ENCODE measurements at regions of chr6 and their contacts with region 1.

Region 1: DNA sequence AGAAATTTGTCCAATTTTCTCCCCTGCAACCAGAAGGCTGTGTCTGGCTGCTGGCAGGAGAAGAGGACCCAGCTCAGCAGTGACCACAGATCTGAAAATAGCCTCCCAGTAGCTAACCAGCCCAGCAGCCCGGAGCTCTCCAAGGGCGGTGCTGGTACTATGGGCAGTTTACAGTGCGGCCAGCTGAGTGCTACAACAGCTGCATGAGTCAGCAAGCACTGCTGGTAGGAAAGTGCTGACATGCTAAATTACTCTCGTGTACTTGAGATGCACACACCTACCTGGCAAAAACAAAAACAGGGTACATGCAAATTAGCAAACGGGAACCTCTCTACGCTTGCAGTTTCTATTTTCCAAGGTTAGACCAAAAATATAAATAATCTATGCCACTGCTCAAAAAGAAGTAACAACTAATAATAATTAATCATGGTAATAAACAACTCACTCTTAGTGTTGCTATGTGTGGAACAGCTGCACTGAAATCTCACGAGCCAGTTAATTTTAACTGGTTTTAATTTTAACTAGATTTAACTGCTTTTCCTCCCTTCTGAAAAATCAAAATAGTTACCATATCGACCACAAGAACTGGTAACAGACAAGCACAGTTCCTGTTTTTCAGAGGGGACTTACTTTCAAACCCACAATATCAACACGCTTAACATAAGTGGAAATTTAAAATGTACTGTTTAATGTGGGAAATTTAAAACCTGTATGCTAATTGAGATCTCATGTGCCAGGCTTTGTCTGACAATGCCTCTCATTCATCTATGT is 10.8 kb downstream of the BACH2 start:
- DNase-seq: peak; percentile 51
- H3K4me3 Mint-ChIP-seq: peak overlapping the region; percentile 71
- H3K27ac Mint-ChIP-seq: peak overlapping the region; percentile 90
- H3K4me1 Mint-ChIP-seq: peaks cover 83% of the 10 kb centered on the region
- H3K27me3 Mint-ChIP-seq: no peaks in the 10 kb centered on the region

Region 2: GRCh38 chr6:89819336-89820130 is 466.3 kb before region 1 on chr6 and contains the start of gene MDN1:
- intact Hi-C with region 1: loop called (anchors 10 kb)
- DNase-seq: peak; percentile 87
- H3K4me3 Mint-ChIP-seq: peak within 1 kb of the TSS; percentile 91
- H3K27ac Mint-ChIP-seq: peak within 1 kb of the TSS; percentile 97
- H3K4me1 Mint-ChIP-seq: peaks cover 21% of the 10 kb centered on the region
- H3K27me3 Mint-ChIP-seq: no peaks in the 10 kb centered on the region
- total RNA-seq, gene MDN1: 61.7 and 66.5 TPM in 2 replicates

Region 3: GRCh38 chr6:90202156-90202555 is 83.6 kb before region 1 on chr6:
- intact Hi-C with region 1: loop called (anchors 1 kb)
- DNase-seq: no peak
- H3K4me3 Mint-ChIP-seq: peak overlapping the region; percentile 50
- H3K27ac Mint-ChIP-seq: peak overlapping the region; percentile 52
- H3K4me1 Mint-ChIP-seq: peaks cover 37% of the 10 kb centered on the region
- H3K27me3 Mint-ChIP-seq: no peaks in the 10 kb centered on the region

Region 4: DNA sequence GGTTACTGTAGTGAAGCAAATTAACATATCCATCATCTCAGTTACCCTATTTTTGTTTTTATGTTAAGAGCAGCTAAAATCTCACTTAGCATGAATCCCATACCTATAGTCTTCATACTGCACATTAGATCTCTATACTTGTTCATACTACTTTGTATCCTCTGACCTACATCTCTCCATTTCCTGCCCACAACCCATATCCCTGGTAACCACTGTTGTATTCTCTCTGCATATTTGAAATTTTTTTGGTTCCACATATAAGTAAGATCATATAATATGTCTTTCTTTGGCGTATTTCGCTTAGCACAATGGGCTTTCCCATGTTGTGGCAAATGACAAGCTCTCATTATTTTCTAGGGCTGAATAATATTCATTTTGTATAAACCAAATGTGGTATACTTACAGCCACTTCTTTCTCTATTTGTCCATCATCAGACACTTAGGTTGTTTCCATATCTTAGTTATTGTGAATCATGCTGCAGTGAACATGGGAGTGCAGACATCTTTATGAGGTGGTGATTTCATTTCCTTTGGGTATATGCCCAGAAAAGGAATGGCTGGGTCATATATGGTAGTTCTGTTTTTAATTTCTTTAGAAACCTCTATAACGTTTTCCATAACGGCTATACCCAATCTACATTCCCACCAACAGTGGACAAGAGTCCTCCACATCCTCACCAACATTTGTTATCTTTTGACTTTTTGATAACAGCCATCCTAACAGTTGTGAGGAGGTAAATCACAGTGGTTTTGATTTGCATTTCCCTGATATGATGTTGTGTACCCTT is 28.9 kb before region 1 on chr6:
- intact Hi-C with region 1: loop called (anchors 1 kb)
- DNase-seq: no peak
- H3K4me3 Mint-ChIP-seq: no peak overlapping the region
- H3K27ac Mint-ChIP-seq: peak overlapping the region; percentile 90
- H3K4me1 Mint-ChIP-seq: peaks cover 69% of the 10 kb centered on the region
- H3K27me3 Mint-ChIP-seq: no peaks in the 10 kb centered on the region

Region 5: DNA sequence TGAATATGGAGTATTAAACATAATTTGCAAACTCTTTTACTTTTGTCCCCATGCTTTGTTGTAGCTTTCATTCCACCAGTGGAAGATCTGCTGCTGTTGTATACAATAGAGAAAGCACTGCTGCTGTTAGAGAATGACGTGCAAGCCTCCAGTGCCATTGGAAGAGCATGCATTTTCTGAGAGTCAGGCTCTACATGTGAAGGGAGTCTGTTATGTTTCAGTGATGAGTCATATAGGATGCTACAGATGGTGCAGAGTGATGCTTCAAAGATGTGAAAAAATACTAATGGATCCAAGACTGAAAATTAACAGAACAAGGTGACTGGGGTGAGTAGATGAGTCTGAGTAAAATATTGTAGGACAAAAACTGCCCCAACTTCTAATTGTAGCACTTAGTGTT is 33.2 kb after region 1 on chr6:
- intact Hi-C with region 1: loop called (anchors 1 kb)
- DNase-seq: no peak
- H3K4me3 Mint-ChIP-seq: no peak overlapping the region
- H3K27ac Mint-ChIP-seq: peak overlapping the region; percentile 74
- H3K4me1 Mint-ChIP-seq: peaks cover 25% of the 10 kb centered on the region
- H3K27me3 Mint-ChIP-seq: peaks cover 5% of the 10 kb centered on the region

Region 6: GRCh38 chr6:90343581-90343980 is 57.8 kb after region 1 on chr6:
- intact Hi-C with region 1: no loop called
- DNase-seq: no peak
- H3K4me3 Mint-ChIP-seq: no peak overlapping the region
- H3K27ac Mint-ChIP-seq: no peak overlapping the region
- H3K4me1 Mint-ChIP-seq: peaks cover 16% of the 10 kb centered on the region
- H3K27me3 Mint-ChIP-seq: peaks cover 5% of the 10 kb centered on the region

Region 7: DNA sequence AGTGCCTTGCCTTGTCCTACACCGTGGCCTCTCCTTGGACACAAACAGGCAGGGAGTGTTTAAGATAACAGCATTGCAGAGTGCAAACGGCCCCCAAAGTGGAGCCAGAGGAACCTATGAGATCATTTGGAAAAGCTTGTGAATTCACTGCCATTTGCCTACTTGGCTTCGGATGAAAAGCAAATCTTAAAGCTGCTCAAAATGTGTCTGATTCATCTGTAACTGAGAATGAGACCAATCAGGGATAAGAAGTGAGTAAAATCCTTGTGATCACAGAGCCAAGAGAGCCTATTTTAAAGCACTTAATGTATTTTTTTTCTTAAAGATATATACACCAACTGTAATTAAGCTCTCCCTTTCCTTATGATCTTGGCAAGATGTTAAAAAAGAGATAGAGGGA is 76.5 kb after region 1 on chr6:
- intact Hi-C with region 1: no loop called
- DNase-seq: no peak
- H3K4me3 Mint-ChIP-seq: no peak overlapping the region
- H3K27ac Mint-ChIP-seq: no peak overlapping the region
- H3K4me1 Mint-ChIP-seq: peaks cover 2% of the 10 kb centered on the region
- H3K27me3 Mint-ChIP-seq: peaks cover 3% of the 10 kb centered on the region

Region 8: DNA sequence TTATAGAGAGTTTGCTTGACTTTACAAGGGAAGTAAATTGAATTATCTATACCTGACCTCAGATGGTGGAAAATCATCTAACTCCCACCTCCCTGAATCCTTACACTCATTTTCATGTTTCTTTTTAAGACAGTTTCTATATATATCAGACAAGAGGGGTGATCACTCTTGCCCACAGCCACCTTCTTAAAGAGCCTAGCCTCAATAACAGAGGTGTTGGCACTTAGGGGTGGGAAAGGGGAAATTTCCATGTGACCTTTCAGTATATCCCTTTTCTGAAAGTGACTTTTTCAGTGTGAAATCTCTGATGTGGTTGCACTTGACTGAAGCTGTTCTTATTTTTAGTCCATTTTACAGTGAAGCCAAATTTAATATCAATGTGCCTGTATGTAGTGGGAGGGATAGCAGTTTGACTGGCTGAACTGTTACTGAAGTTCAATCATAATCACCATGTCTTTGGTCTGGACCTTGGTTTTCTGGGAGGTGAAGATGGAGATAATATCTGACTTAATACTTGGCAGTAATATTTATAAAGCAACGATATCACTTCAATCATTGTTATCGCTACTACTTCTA is 159.8 kb after region 1 on chr6:
- intact Hi-C with region 1: loop called (anchors 1 kb)
- DNase-seq: no peak
- H3K4me3 Mint-ChIP-seq: no peak overlapping the region
- H3K27ac Mint-ChIP-seq: peak overlapping the region; percentile 97
- H3K4me1 Mint-ChIP-seq: peaks cover 56% of the 10 kb centered on the region
- H3K27me3 Mint-ChIP-seq: no peaks in the 10 kb centered on the region

Region 9: DNA sequence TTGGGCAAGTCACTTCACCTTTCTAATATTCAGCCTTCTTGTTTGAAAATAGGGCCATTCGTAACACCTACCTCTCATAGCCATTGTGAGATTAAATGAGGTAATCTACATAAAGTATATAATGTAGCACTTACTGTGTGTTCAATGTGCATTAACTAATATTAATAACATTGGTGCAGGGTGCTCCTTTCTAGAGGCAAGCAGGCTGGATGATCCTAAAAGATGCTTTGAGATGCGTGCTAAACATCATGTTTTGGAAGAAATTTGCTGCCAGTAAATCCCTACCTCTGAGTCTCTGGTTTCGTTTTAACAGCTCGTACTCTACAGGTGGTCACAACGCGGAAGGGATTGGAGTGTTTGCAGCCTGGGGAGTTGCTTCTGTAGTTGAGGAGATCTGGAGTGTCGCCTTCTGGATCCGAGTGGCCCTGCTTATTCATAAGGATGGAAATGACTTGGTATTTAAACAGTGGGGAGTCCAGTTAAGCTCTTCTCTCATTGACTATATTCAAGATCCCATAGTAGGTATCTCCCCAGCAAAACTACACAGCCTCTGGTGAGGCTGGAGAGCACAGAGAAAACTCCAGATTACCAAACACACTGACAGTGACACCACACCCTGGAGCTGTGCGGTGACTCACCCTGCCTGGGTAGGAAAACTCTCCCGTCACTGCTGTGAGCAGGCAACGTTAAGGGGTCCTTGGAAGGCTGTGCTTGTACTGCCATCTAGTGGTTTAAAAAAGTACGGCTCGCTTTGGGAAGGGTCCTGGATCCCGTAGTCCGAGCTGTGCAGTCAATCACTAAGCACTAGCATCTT is 193.2 kb after region 1 on chr6:
- intact Hi-C with region 1: loop called (anchors 1 kb)
- DNase-seq: peak; percentile 75
- H3K4me3 Mint-ChIP-seq: peak overlapping the region; percentile 17
- H3K27ac Mint-ChIP-seq: peak overlapping the region; percentile 67
- H3K4me1 Mint-ChIP-seq: peaks cover 58% of the 10 kb centered on the region
- H3K27me3 Mint-ChIP-seq: no peaks in the 10 kb centered on the region